ENCODE measurements at regions of chr6 and their contacts with region 1.

Region 1: DNA sequence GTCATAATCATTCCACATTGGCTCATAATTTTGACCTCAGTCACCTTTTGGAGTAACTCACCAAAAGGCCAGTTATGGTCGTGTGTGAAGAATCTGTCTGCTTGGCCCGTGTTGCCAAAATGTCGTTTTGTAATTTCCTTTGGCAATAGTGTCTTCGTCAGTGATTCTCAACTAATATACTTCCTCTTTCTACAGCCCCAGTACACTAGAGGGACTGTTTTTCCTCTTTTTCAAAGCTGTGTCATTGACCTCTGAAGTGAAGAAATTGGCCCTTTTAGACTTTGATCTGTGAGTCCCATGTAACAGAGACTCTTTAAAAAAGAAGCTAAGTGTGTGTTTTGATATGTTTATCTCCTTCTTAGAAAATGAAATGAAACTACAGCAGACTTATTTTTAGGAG is 5.2 kb downstream of the FOXO3 start:
- DNase-seq: peak in 1 of 2 donors; percentile 88
- H3K4me3 ChIP-seq: peak overlapping the region in 1 of 2 donors; percentile 93
- H3K27ac ChIP-seq: peak overlapping the region; percentile 98
- H3K4me1 ChIP-seq: peaks cover 2 to 47% of the 10 kb centered on the region in 2 donors
- H3K27me3 ChIP-seq: no peaks in the 10 kb centered on the region
- CTCF ChIP-seq: peak in 1 of 3 experiments; percentile 11

Region 2: GRCh38 chr6:108592371-108593337 is 26.8 kb after region 1 on chr6:
- intact Hi-C with region 1: loop called (anchors 2 kb)
- DNase-seq: no peak
- H3K4me3 ChIP-seq: peak overlapping the region; percentile 35 to 38
- H3K27ac ChIP-seq: peak overlapping the region; percentile 87 to 91
- H3K4me1 ChIP-seq: peaks cover 48 to 98% of the 10 kb centered on the region in 2 donors
- H3K27me3 ChIP-seq: no peaks in the 10 kb centered on the region
- CTCF ChIP-seq: no peak

Region 3: DNA sequence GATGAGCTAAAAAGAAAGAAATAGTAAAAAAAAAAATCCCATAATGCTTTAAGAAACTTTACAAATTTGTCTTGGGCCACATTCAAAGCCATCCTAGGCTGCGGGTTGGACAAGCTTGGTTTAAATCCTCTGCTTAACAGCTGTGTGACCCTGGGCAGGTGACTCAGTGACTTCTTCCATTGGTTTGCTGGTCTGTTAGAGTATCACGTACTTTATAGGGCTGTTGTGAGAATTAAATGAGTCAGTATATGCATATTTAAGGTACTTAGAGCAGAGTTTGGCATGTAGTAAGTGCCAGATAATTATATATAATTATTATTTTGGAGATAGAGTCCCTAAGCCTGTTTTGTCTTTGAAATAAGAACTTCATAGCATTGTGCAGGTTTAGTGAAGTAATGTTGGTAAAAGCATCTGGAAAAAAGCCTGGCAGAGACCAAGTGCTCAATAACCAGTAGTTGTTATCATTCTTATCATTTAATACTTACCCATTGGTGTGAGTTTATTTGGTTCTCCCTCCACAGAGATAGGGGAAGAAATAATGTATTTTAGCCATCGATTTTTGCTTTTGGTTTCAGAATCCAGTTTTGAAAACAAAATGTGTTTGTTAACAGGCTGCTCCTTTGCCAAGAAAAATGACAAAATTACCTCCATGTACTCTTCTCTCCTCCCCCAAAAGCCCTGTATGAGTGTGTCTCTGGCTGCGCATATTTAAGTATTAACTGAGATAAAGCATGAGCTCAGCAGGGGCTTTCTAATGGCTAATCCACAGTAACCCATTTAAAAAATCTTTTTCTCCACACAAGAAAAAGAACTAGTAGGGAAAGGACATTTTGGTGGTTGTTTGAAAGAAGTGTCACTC is 62.0 kb after region 1 on chr6:
- intact Hi-C with region 1: loop called (anchors 5 kb)
- DNase-seq: no peak
- H3K4me3 ChIP-seq: no peak overlapping the region
- H3K27ac ChIP-seq: peak overlapping the region in 1 of 2 donors; percentile 4
- H3K4me1 ChIP-seq: peaks cover 32 to 56% of the 10 kb centered on the region in 2 donors
- H3K27me3 ChIP-seq: no peaks in the 10 kb centered on the region
- CTCF ChIP-seq: no peak